ENCODE measurements at regions of chr19 and their contacts with region 1.

Region 1: DNA sequence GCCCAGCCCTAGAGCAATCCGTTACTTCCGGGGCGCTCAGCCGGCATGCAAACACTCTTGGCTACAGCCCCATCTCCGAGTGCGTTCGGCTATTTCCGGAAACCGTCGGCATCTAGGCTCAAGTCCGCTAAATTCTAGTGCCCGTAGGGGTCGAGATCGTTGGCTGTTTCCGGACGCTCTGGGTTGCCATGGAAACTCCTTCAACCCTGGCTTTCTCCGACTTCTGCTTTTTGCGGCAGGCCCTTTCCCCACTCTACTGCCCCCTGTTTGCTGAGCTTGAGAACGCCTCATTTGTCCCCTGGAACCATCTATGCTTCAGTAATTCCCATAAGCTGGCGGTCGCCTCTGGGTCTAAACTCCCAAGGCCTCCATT is 533 bp upstream of the PIK3R2 start:
- DNase-seq: peak; percentile 98
- ATAC-seq: peak; percentile 72
- H3K4me3 Mint-ChIP-seq: peak overlapping the region; percentile 91
- H3K27ac Mint-ChIP-seq: peak overlapping the region; percentile 94
- H3K4me1 Mint-ChIP-seq: peaks cover 17% of the 10 kb centered on the region
- H3K27me3 Mint-ChIP-seq: no peaks in the 10 kb centered on the region

Region 2: GRCh38 chr19:18021121-18021755 is 131.2 kb before region 1 on chr19:
- POLR2A ChIA-PET with region 1: no interaction called
- DNase-seq: peak; percentile 48
- ATAC-seq: no peak
- H3K4me3 Mint-ChIP-seq: peak overlapping the region; percentile 89
- H3K27ac Mint-ChIP-seq: peak overlapping the region; percentile 98
- H3K4me1 Mint-ChIP-seq: peaks cover 49% of the 10 kb centered on the region
- H3K27me3 Mint-ChIP-seq: peaks cover 1% of the 10 kb centered on the region

Region 3: GRCh38 chr19:18058208-18059030 is 94.0 kb before region 1 on chr19:
- POLR2A ChIA-PET with region 1: no interaction called
- DNase-seq: peak; percentile 88
- ATAC-seq: peak; percentile 82
- H3K4me3 Mint-ChIP-seq: peak overlapping the region; percentile 55
- H3K27ac Mint-ChIP-seq: peak overlapping the region; percentile 75
- H3K4me1 Mint-ChIP-seq: peaks cover 16% of the 10 kb centered on the region
- H3K27me3 Mint-ChIP-seq: no peaks in the 10 kb centered on the region

Region 4: GRCh38 chr19:18100710-18101109 is 51.7 kb before region 1 on chr19:
- POLR2A ChIA-PET with region 1: no interaction called
- DNase-seq: no peak
- ATAC-seq: no peak
- H3K4me3 Mint-ChIP-seq: no peak overlapping the region
- H3K27ac Mint-ChIP-seq: no peak overlapping the region
- H3K4me1 Mint-ChIP-seq: peaks cover 26% of the 10 kb centered on the region
- H3K27me3 Mint-ChIP-seq: no peaks in the 10 kb centered on the region

Region 5: DNA sequence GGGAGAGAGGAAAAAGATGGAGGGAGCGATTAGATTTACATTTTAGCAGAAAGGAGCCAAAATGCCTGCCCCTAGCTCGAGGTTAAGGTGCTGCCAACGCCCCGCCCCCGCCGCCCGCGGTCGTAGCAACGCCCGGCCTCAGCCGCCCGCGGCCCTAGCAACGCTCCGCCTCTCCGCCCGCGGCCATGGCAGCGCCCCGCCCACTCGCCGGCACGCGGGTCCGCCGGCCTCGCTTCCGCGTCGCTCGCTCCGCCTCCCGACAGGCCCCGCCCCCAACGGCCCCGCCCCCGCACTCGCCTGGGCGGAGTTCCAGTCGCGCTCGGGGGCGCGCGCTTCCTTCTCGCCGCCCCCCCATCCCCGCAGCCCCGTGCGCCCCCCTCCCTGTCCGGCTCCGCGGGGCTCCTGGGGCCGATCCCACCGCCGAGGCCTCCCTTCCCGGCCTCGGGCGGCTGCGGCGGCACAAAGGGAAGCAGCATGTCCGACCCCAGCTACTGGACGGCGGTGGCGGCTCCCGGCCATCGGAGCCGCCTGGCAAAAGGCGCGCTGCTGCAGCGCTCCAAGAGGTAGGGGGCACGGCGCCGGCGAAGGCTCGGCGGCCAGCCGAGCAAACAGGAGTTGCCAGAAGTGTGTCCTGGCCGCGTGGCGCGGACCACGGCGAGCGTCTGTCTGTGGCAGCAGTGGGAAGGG is 34.6 kb before region 1 on chr19:
- POLR2A ChIA-PET with region 1: interaction called, 29 read pairs
- DNase-seq: peak; percentile 100
- ATAC-seq: peak; percentile 62
- H3K4me3 Mint-ChIP-seq: peak overlapping the region; percentile 88
- H3K27ac Mint-ChIP-seq: peak overlapping the region; percentile 97
- H3K4me1 Mint-ChIP-seq: peaks cover 29% of the 10 kb centered on the region
- H3K27me3 Mint-ChIP-seq: no peaks in the 10 kb centered on the region

Region 6: GRCh38 chr19:18141894-18142293 is 10.5 kb before region 1 on chr19:
- POLR2A ChIA-PET with region 1: interaction called, 12 read pairs
- DNase-seq: no peak
- ATAC-seq: no peak
- H3K4me3 Mint-ChIP-seq: no peak overlapping the region
- H3K27ac Mint-ChIP-seq: no peak overlapping the region
- H3K4me1 Mint-ChIP-seq: no peaks in the 10 kb centered on the region
- H3K27me3 Mint-ChIP-seq: no peaks in the 10 kb centered on the region

Region 7: GRCh38 chr19:18214779-18215433 is 62.5 kb after region 1 on chr19:
- POLR2A ChIA-PET with region 1: no interaction called
- DNase-seq: no peak
- ATAC-seq: peak; percentile 26
- H3K4me3 Mint-ChIP-seq: no peak overlapping the region
- H3K27ac Mint-ChIP-seq: no peak overlapping the region
- H3K4me1 Mint-ChIP-seq: peaks cover 4% of the 10 kb centered on the region
- H3K27me3 Mint-ChIP-seq: peaks cover 5% of the 10 kb centered on the region